Vagina (tissue), 2 donors: ENCODE measurements at regions of chr22 and their contacts with region 1.

Region 1: DNA sequence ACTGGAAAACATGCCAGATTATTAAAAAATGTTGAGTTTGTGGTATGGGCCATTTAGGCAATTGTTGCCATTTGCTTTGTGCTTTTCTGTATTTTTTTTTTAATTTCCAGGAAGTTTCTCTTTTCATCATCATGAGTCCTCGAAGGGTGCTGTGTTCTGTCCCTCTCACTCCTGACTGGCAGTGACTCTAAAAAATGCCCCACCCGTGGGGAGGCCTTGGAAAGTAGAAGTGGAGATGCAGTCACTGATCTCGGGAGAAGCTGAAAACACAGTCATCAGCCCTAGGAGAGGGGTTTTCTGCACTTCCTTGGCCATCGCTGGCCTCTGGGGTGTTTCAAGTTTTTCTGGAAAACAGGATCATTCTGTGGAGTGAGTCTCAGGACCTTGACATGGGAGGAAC is 98.5 kb upstream of the GRK3 start:
- DNase-seq: no peak
- H3K4me3 ChIP-seq: no peak overlapping the region
- H3K27ac ChIP-seq: no peak overlapping the region
- H3K4me1 ChIP-seq: no peaks in the 10 kb centered on the region
- H3K27me3 ChIP-seq: no peaks in the 10 kb centered on the region
- CTCF ChIP-seq: no peak
- POLR2A ChIP-seq: no peak

Region 2: GRCh38 chr22:23743303-23743705 is 1722.6 kb before region 1 on chr22:
- intact Hi-C with region 1: no loop called
- DNase-seq: no peak
- H3K4me3 ChIP-seq: no peak overlapping the region
- H3K27ac ChIP-seq: no peak overlapping the region
- H3K4me1 ChIP-seq: no peaks in the 10 kb centered on the region
- H3K27me3 ChIP-seq: no peaks in the 10 kb centered on the region
- CTCF ChIP-seq: no peak
- POLR2A ChIP-seq: no peak

Region 3: GRCh38 chr22:25362215-25362882 is 103.6 kb before region 1 on chr22:
- intact Hi-C with region 1: no loop called
- DNase-seq: no peak
- H3K4me3 ChIP-seq: no peak overlapping the region
- H3K27ac ChIP-seq: no peak overlapping the region
- H3K4me1 ChIP-seq: peaks cover 33% of the 10 kb centered on the region
- H3K27me3 ChIP-seq: no peaks in the 10 kb centered on the region
- CTCF ChIP-seq: peak; percentile 48 to 77 (median 73)
- POLR2A ChIP-seq: no peak

Region 4: GRCh38 chr22:25403811-25404471 is 62.0 kb before region 1 on chr22:
- intact Hi-C with region 1: no loop called
- DNase-seq: peak in 1 of 2 donors; percentile 85
- H3K4me3 ChIP-seq: peak overlapping the region; percentile 66 to 80
- H3K27ac ChIP-seq: peak overlapping the region; percentile 95
- H3K4me1 ChIP-seq: peaks cover 50% of the 10 kb centered on the region
- H3K27me3 ChIP-seq: no peaks in the 10 kb centered on the region
- CTCF ChIP-seq: no peak
- POLR2A ChIP-seq: no peak

Region 5: GRCh38 chr22:25518000-25518663 is 52.2 kb after region 1 on chr22:
- intact Hi-C with region 1: no loop called
- DNase-seq: no peak
- H3K4me3 ChIP-seq: no peak overlapping the region
- H3K27ac ChIP-seq: no peak overlapping the region
- H3K4me1 ChIP-seq: no peaks in the 10 kb centered on the region
- H3K27me3 ChIP-seq: no peaks in the 10 kb centered on the region
- CTCF ChIP-seq: no peak
- POLR2A ChIP-seq: no peak

Region 6: DNA sequence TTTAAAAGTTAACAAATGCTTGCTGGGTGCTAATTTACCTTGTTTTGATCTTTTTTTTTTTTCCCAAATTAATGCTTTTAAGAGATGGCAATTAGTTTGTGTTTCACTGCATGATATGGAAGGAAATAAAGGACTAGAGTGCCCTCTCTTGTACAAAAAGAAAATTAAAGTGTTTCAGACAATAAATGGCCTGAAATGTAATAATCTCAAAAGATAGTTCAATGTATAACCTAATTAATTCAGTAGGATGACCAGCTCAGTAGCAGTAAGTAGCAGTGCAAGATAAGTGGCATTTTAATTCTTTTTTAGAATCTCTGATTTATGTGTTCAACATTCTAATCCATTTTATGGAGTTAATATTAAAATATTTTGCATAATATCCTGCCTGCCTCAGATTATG is 236.1 kb after region 1 on chr22:
- intact Hi-C with region 1: loop called (anchors 5 kb)
- DNase-seq: no peak
- H3K4me3 ChIP-seq: no peak overlapping the region
- H3K27ac ChIP-seq: no peak overlapping the region
- H3K4me1 ChIP-seq: peaks cover 4% of the 10 kb centered on the region
- H3K27me3 ChIP-seq: no peaks in the 10 kb centered on the region
- CTCF ChIP-seq: peak in 2 of 3 experiments; percentile 15 to 29
- POLR2A ChIP-seq: no peak

Region 7: DNA sequence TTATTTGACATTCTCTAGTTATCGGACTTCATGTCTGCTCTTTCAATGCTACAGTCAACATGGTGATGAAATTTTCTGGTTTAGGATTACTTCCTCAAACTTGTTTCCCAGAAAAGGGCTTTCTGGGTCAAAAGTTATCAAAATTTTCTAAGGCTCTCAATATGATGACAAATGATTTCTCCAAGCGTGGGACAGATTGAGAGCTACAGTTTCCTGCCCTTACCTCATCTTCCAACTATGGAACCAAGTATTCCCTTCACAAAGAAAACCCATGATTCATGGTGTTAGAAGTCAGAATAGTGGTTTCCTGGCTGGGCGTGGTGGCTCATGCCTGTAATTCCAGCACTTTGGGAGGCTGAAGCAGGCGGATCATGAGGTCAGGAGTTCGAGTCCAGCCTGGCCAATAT is 293.9 kb after region 1 on chr22:
- intact Hi-C with region 1: loop called (anchors 10 kb)
- DNase-seq: no peak
- H3K4me3 ChIP-seq: no peak overlapping the region
- H3K27ac ChIP-seq: no peak overlapping the region
- H3K4me1 ChIP-seq: no peaks in the 10 kb centered on the region
- H3K27me3 ChIP-seq: no peaks in the 10 kb centered on the region
- CTCF ChIP-seq: no peak
- POLR2A ChIP-seq: no peak